PC-9 (cell line): ENCODE measurements at regions of chr15 and their contacts with region 1.

Region 1: DNA sequence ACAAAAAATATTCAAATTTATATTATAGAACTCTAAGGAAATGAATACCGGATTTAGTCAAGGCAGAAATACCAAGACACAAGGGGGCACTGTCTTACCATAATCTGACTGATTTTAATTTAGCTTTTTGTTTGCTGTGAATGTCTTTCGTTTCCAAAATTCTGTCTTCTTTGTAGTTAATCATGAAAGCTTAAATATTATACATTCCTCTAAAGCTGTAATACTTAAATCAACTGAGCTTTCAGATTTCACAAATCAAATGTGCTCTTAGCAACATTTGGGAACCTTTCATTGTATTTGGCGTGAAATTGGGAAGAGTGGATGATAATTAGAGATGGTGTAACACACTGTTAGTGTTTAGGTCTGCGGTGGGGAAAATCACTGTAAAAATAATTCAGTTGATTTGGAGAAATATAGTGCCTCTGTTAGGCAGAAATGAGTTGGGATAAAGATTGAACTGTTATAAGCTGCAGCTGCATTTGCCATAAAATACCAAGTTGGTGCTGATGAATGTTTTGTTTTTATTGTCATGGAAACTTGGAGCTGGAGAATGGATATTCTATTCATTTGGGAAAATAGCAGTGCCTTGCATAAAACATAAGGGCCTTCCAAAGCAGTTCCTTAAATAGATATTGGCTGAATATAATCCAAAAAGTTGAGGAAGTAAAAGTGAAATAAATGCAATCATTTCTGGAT is 228.2 kb downstream of the TCF12 start:
- DNase-seq: no peak
- H3K4me3 ChIP-seq: no peak overlapping the region
- H3K27ac ChIP-seq: no peak overlapping the region
- H3K4me1 ChIP-seq: no peaks in the 10 kb centered on the region
- H3K27me3 ChIP-seq: no peaks in the 10 kb centered on the region
- CTCF ChIP-seq: peak; percentile 70

Region 2: GRCh38 chr15:57306161-57306943 is 159.7 kb after region 1 on chr15:
- CTCF ChIA-PET with region 1: interaction called, 3 read pairs
- POLR2A ChIA-PET with region 1: no interaction called
- intact Hi-C with region 1: loop called (anchors 2 kb)
- DNase-seq: peak in 1 of 2 experiments; percentile 78
- H3K4me3 ChIP-seq: no peak overlapping the region; the same call in 1 of the 2 replicates
- H3K27ac ChIP-seq: no peak overlapping the region
- H3K4me1 ChIP-seq: no peaks in the 10 kb centered on the region
- H3K27me3 ChIP-seq: no peaks in the 10 kb centered on the region
- CTCF ChIP-seq: peak; percentile 78

Region 3: GRCh38 chr15:57706405-57707209 is 560.0 kb after region 1 on chr15 and contains the start of gene POLR2M:
- CTCF ChIA-PET with region 1: interaction called, 14 read pairs
- POLR2A ChIA-PET with region 1: no interaction called
- intact Hi-C with region 1: no loop called
- DNase-seq: peak; percentile 84 to 85
- H3K4me3 ChIP-seq: peak within 1 kb of the TSS; percentile 74
- H3K27ac ChIP-seq: peak within 1 kb of the TSS; percentile 74
- H3K4me1 ChIP-seq: peaks cover 15% of the 10 kb centered on the region
- H3K27me3 ChIP-seq: no peaks in the 10 kb centered on the region
- CTCF ChIP-seq: no peak
- total RNA-seq, gene POLR2M: 53.9 and 56.8 TPM in 2 replicates